Mammary epithelial cell (primary cell): ENCODE measurements at regions of chr9 and their contacts with region 1.

Region 1: DNA sequence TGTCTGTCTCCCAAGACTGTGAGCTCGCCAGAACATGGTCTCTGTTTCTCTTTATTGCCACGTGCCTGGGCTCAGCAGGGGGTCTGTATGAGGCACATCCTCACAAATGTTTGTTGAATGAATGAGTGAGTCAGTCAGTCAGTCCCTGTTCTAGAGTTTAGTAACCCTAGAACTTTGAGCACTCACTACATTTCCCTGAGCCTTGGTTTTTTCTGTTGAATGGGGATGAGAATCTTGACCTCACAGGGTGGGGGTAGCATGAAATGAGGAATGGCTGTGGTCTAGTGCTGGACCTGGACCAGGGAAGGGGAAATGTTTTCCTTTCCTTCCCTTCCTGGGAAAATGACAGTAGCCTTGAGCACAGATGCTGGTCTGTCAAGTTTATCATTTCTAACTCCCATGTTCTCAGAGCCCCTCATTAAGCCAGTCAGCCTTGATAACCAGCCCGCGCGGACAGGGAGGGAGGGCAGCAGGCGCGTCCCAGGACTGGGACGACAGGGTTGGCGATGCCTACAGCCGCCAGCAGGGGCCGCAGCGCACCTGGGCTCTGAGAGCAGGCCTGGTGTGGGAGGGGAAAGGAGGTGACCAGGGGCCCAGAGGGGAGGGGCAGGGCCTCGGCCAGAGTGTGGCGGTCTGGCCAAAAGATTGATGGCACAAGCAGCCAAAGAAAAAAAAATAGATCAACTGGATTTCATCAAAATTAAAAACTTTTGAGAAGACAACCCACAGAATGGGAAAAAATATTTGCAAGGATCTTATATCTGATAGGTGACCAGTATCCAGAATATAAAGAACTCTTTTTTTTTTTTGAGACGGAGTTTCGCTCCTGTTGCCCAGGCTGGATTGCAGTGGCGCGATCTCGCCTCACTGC is 24.1 kb upstream of the WNK2 start:
- DNase-seq: peak; percentile 62
- H3K4me3 ChIP-seq: no peak overlapping the region
- H3K27ac ChIP-seq: no peak overlapping the region
- H3K4me1 ChIP-seq: no peaks in the 10 kb centered on the region
- H3K27me3 ChIP-seq: no peaks in the 10 kb centered on the region
- CTCF ChIP-seq: peak; percentile 87 to 99

Region 2: GRCh38 chr9:93003552-93004407 is 156.1 kb before region 1 on chr9:
- CTCF ChIA-PET with region 1: no interaction called
- dilution Hi-C with region 1: no loop called
- in situ Hi-C with region 1: no loop called
- intact Hi-C with region 1: loop called (anchors 2 kb)
- DNase-seq: peak; percentile 42
- H3K4me3 ChIP-seq: no peak overlapping the region
- H3K27ac ChIP-seq: no peak overlapping the region
- H3K4me1 ChIP-seq: no peaks in the 10 kb centered on the region
- H3K27me3 ChIP-seq: no peaks in the 10 kb centered on the region
- CTCF ChIP-seq: peak; percentile 52 to 78

Region 3: DNA sequence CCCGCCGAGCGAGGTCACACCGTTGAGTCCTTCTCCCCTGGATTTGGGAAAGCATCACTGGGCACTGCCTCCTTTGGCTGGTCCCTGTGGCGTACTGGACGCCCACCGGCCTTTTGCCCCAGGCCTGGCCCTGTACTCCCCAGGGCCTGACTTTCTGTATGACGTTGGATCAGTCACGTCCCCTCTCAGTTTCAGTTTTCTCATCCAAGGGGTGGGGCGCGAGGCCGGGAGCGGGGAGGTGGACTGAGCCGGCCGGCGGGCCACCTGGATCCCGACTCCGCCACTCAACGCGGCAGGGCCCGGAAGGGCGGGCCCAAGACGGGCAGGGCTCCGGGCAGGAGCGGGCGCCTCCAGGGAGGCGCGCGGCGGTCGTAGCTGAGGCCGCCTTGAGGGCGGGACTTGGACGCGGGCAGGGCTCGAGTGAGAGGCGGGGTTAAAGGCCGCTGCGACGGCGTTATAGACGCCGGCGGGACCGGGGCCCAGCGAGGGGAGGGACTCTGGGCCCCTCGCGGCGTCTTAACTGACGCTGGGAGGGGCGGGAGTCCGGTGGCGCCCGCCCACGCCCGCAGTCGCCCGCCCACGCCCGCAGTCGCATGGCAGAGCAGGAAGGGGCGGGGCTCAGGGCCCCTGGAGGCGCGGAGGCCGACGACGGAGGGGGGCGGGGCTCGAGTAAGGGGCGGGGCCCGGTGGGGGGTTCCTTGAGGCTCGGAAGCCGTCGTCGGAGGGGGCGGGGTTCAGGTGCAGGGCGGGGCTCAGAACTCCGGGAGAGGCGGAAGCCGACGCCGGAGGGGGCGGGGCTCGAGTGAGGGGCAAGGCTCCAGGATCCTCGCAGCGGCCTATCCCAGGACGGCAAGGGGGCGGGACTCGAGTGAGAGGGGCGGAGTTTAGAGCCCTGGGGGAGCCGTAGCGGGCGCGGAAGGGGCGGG is 64.4 kb before region 1 on chr9:
- CTCF ChIA-PET with region 1: no interaction called
- dilution Hi-C with region 1: no loop called
- in situ Hi-C with region 1: no loop called
- intact Hi-C with region 1: no loop called
- DNase-seq: peak; percentile 97
- H3K4me3 ChIP-seq: peak overlapping the region; percentile 25 to 79 (median 37)
- H3K27ac ChIP-seq: peak overlapping the region; percentile 72
- H3K4me1 ChIP-seq: peaks cover 44% of the 10 kb centered on the region
- H3K27me3 ChIP-seq: no peaks in the 10 kb centered on the region
- CTCF ChIP-seq: no peak

Region 4: DNA sequence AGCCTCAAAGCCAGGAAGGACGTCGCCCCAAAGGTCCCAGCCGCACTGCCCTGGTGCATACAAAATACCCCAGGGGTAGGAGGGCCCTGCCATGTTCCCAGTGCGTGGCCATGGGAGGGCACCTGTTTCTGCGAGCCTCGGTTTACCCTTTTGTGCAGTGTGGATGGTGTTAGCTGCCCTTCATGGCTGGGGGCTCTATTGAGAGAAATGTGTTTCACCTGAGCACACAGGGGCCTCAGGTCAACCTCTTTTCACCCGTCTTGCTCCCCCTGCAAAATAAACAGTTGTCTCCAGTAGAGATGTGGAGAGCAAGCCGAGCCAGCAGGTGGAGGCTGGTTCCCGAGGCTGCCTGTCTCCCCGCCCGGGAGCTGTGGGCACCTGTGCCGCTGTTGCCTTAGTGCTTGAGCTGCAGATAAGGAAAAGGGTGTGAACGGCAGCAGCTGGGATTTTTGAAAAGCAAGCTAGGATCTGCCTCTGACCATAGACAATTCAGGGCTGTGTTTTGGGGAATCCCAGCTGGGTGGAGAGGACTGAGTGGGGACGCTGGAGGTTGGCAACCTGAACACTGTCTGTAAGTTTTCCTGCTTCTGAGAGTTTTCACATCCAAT is 33.4 kb after region 1 on chr9:
- CTCF ChIA-PET with region 1: interaction called, 3 read pairs
- dilution Hi-C with region 1: loop called (anchors 5 kb)
- in situ Hi-C with region 1: no loop called
- intact Hi-C with region 1: no loop called
- DNase-seq: peak; percentile 29
- H3K4me3 ChIP-seq: no peak overlapping the region
- H3K27ac ChIP-seq: no peak overlapping the region
- H3K4me1 ChIP-seq: no peaks in the 10 kb centered on the region
- H3K27me3 ChIP-seq: no peaks in the 10 kb centered on the region
- CTCF ChIP-seq: peak in 1 of 2 donors; percentile 45

Region 5: DNA sequence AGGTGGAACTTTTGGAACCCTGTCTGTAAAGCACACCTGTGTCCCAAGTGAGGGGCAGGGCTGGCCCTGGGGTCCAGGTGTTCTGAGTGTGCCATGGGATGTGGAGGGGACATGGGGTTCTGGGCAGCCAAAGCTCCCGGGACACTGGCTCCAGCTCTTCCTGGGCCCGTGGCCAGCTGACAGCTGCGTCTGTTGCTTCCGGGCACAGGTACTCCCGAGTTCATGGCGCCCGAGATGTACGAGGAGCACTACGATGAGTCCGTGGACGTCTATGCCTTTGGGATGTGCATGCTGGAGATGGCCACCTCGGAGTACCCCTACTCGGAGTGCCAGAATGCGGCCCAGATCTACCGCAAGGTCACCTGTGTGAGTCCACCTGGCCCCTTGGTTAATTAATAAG is 74.8 kb after region 1 on chr9:
- CTCF ChIA-PET with region 1: no interaction called
- dilution Hi-C with region 1: no loop called
- in situ Hi-C with region 1: no loop called
- intact Hi-C with region 1: no loop called
- DNase-seq: no peak
- H3K4me3 ChIP-seq: no peak overlapping the region
- H3K27ac ChIP-seq: no peak overlapping the region
- H3K4me1 ChIP-seq: no peaks in the 10 kb centered on the region
- H3K27me3 ChIP-seq: peaks cover 6% of the 10 kb centered on the region
- CTCF ChIP-seq: no peak

Region 6: DNA sequence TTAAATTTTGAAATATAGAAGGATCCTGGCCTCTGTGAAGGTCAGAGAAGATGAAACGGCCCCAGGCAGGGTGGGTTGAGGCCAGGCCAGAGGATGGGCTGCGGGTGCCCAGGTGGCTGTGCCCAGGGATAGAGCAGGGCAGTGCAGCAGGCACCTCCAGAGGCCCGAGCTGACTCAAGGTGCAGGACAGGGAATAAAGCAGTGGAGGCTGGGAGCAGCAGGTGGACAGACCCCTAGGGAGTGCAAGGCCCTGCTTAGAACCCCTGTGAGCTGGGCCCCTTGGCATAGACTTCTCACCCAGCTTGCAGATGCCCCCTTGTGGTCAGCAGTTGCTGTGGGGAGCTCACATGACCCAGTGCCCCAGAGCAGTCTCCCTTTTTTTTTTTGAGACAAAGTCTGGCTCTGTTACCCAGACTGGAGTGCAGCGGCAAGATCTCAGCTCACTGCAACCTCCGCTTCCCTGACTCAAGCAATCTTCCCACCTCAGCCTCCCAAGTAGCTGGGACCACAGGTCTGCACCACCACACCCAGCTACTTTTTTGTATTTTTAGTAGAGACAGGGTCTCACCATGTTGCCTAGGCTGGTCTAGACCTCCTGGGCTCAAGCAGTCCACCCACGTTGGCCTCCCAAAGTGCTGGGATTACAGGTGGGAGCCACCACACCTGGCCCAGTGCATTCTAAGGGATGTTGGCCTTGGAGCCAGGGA is 142.9 kb after region 1 on chr9:
- CTCF ChIA-PET with region 1: no interaction called
- dilution Hi-C with region 1: no loop called
- in situ Hi-C with region 1: loop called (anchors 5 kb)
- intact Hi-C with region 1: loop called (anchors 1 kb)
- DNase-seq: peak; percentile 39
- H3K4me3 ChIP-seq: no peak overlapping the region
- H3K27ac ChIP-seq: no peak overlapping the region
- H3K4me1 ChIP-seq: no peaks in the 10 kb centered on the region
- H3K27me3 ChIP-seq: no peaks in the 10 kb centered on the region
- CTCF ChIP-seq: peak; percentile 44 to 73

Region 7: DNA sequence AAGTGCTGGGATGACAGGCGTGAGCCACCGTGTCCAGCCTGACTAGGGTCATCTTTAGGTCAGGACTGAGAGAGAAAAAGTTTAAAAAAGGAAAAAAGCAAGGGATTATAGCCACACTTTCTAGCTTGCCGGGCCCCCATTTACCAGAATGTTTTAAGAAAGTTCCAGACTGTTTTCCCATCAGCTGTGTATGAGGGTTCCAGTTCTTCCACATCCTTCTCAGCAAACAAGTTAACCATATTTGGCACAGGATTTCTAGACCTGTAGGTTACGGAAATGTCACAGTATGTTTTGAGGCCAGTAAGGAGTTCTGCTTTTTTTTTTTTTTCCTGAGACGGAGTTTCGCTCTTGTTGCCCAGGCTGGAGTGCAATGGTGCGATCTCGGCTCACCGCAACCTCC is 284.5 kb after region 1 on chr9:
- CTCF ChIA-PET with region 1: no interaction called
- dilution Hi-C with region 1: no loop called
- in situ Hi-C with region 1: no loop called
- intact Hi-C with region 1: loop called (anchors 10 kb)
- DNase-seq: no peak
- H3K4me3 ChIP-seq: no peak overlapping the region
- H3K27ac ChIP-seq: no peak overlapping the region
- H3K4me1 ChIP-seq: no peaks in the 10 kb centered on the region
- H3K27me3 ChIP-seq: no peaks in the 10 kb centered on the region
- CTCF ChIP-seq: no peak

Region 8: GRCh38 chr9:94002316-94003140 is 842.7 kb after region 1 on chr9:
- CTCF ChIA-PET with region 1: no interaction called
- dilution Hi-C with region 1: no loop called
- in situ Hi-C with region 1: no loop called
- intact Hi-C with region 1: loop called (anchors 10 kb)
- DNase-seq: peak; percentile 35
- H3K4me3 ChIP-seq: no peak overlapping the region
- H3K27ac ChIP-seq: no peak overlapping the region
- H3K4me1 ChIP-seq: peaks cover 6% of the 10 kb centered on the region
- H3K27me3 ChIP-seq: no peaks in the 10 kb centered on the region
- CTCF ChIP-seq: peak; percentile 54 to 76